ENCODE measurements at regions of chr11 and their contacts with region 1.

Region 1: GRCh38 chr11:129223701-129224149 is 31.6 kb upstream of the ARHGAP32 start:
- DNase-seq: peak; percentile 67
- H3K4me3 Mint-ChIP-seq: peak overlapping the region; percentile 48
- H3K27ac Mint-ChIP-seq: peak overlapping the region; percentile 57
- H3K4me1 Mint-ChIP-seq: peaks cover 22% of the 10 kb centered on the region
- H3K27me3 Mint-ChIP-seq: no peaks in the 10 kb centered on the region
- CTCF ChIP-seq: no peak

Region 2: DNA sequence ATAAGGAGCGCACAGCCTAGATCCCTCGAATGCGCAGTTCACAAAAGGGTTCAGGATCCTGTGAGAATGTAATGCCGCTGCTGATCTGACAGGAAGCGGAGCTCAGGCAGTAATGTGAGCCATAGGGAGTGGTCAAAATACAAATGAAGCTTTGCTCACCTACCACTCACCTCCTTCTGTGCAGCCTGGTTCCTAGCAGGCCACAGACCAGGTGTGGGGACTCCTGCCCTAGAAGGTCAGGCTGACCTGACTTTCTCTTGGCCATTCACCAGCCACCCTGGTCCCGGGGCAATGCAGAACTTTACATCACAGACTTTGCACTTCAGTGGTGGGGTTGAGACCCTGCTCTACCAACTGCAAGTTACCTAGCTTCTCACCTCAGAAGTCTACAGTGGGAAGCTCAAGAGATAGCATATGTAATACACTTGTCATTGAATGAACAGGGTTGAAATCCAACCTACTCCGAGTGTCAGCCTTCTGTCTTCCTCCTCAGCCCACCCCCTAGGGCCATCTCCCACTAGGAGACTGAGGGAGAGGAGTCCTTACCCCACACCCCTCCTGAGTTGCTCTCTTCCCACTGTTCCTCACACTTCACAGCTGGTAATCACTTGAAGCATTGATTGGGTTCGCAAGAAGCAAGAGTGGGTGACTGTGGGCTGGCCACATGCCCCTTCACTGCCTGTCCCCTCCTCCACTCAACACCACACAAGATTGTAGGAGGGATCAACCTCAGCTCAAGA is 354.7 kb before region 1 on chr11:
- CTCF ChIA-PET with region 1: no interaction called
- POLR2A ChIA-PET with region 1: no interaction called
- intact Hi-C with region 1: no loop called
- DNase-seq: no peak
- H3K4me3 Mint-ChIP-seq: no peak overlapping the region
- H3K27ac Mint-ChIP-seq: no peak overlapping the region
- H3K4me1 Mint-ChIP-seq: no peaks in the 10 kb centered on the region
- H3K27me3 Mint-ChIP-seq: peaks cover under 1% of the 10 kb centered on the region
- CTCF ChIP-seq: no peak

Region 3: GRCh38 chr11:129006161-129006560 is 217.6 kb before region 1 on chr11:
- CTCF ChIA-PET with region 1: no interaction called
- POLR2A ChIA-PET with region 1: no interaction called
- intact Hi-C with region 1: no loop called
- DNase-seq: no peak
- H3K4me3 Mint-ChIP-seq: no peak overlapping the region
- H3K27ac Mint-ChIP-seq: peak overlapping the region; percentile 70
- H3K4me1 Mint-ChIP-seq: no peaks in the 10 kb centered on the region
- H3K27me3 Mint-ChIP-seq: no peaks in the 10 kb centered on the region
- CTCF ChIP-seq: no peak

Region 4: DNA sequence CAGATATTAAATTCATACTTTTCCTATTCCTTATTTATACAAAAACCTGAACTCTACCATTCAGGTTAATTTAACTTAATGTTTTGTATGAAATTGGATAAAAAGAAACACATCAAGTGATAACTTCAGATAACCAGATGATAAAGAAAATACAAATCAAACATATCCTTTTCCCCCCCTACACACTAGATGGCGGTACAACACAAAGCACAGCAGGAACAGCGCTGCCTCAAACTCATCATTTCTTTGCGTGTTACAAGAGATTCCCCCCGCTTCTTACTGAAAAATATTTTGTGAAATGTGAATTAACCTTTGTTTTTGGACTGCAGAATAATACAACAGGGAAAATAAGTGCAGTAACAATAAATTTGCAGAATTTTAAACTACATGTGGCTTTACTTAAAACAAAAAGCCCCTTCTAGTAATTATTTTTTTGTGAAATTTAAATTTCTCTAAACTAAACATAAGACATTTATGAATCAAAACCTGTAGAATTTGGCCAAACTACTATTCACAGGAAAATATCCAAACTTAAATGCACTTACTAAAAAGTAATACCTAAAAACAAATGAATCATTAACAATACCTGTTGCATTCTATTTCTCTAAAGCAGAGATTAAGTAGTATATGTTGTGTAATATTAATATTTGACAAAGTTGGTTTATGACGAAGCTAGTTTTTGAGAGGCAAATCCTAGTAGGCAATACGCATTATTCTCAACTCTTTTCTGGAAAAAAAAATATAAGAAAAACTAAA is 106.0 kb before region 1 on chr11:
- CTCF ChIA-PET with region 1: interaction called, 8 read pairs
- POLR2A ChIA-PET with region 1: no interaction called
- intact Hi-C with region 1: loop called (anchors 5 kb)
- DNase-seq: peak; percentile 79
- H3K4me3 Mint-ChIP-seq: no peak overlapping the region
- H3K27ac Mint-ChIP-seq: no peak overlapping the region
- H3K4me1 Mint-ChIP-seq: peaks cover 33% of the 10 kb centered on the region
- H3K27me3 Mint-ChIP-seq: no peaks in the 10 kb centered on the region
- CTCF ChIP-seq: peak; percentile 84

Region 5: GRCh38 chr11:129143335-129143734 is 80.4 kb before region 1 on chr11:
- CTCF ChIA-PET with region 1: no interaction called
- POLR2A ChIA-PET with region 1: interaction called, 16 read pairs
- intact Hi-C with region 1: no loop called
- DNase-seq: peak; percentile 100
- H3K4me3 Mint-ChIP-seq: peak overlapping the region; percentile 70
- H3K27ac Mint-ChIP-seq: peak overlapping the region; percentile 94
- H3K4me1 Mint-ChIP-seq: peaks cover 32% of the 10 kb centered on the region
- H3K27me3 Mint-ChIP-seq: no peaks in the 10 kb centered on the region
- CTCF ChIP-seq: no peak

Region 6: DNA sequence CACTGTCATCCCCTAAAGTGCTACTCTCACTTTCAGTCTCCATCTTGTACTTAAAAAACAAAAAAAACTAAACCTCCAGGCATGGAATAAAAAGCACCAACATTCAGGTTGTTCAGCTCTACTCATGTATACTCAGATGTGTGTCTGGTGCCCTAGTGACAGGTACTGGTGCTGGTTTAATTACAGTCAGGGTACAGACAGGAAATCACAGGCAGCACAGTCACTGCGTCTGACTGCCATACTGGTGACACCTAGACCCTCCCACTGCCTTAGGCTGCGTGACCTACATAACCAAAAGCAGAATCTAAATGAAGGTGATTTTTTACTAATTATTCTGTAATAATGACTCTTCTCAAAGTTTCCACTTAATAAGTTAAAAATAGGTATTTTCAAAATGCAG is 31.6 kb before region 1 on chr11 and contains the start of gene ARHGAP32:
- CTCF ChIA-PET with region 1: no interaction called
- POLR2A ChIA-PET with region 1: interaction called, 40 read pairs
- intact Hi-C with region 1: no loop called
- DNase-seq: peak; percentile 51
- H3K4me3 Mint-ChIP-seq: no peak within 1 kb of the TSS
- H3K27ac Mint-ChIP-seq: no peak within 1 kb of the TSS
- H3K4me1 Mint-ChIP-seq: peaks cover 12% of the 10 kb centered on the region
- H3K27me3 Mint-ChIP-seq: no peaks in the 10 kb centered on the region
- CTCF ChIP-seq: no peak
- total RNA-seq, gene ARHGAP32: 62.6 and 71.3 TPM in 2 replicates

Region 7: GRCh38 chr11:129204150-129204838 is 19.4 kb before region 1 on chr11:
- CTCF ChIA-PET with region 1: no interaction called
- POLR2A ChIA-PET with region 1: interaction called, 11 read pairs
- intact Hi-C with region 1: no loop called
- DNase-seq: no peak
- H3K4me3 Mint-ChIP-seq: no peak overlapping the region
- H3K27ac Mint-ChIP-seq: no peak overlapping the region
- H3K4me1 Mint-ChIP-seq: peaks cover 12% of the 10 kb centered on the region
- H3K27me3 Mint-ChIP-seq: no peaks in the 10 kb centered on the region
- CTCF ChIP-seq: no peak

Region 8: DNA sequence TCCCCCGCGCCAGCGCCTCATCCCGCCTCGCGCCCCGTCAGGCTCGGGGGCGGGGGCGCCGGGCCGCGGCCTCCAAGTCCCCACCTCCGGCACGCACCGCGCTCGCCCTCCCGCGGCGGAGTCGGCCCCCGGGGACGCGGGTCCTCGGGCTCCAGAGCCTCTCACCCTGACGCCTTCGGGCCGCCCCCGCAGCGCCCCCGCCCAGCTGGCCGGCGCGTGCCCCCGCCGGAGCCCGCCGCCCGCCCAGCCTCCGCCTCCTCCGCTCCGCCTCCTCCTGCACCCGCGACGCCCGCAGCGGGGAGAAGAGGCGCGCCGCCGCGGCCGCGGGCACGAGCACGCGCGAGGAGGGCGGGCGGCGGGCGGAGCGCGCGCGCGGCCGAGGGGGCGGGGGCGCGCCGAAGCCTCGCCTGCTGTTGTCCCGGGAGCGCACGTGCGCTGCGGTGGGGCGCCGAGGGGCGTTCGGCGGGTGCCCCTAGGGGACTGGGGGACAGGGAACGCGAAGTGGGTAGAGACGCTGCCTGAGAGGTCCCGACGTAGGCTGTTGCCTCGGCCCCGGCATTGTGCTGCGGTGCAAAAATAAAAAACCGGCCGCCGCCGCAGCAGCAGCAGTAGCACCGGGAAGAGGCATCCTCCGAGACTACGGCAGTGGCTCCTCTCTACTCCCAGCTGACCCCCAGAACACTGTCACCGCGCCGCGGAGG is 55.8 kb after region 1 on chr11:
- CTCF ChIA-PET with region 1: no interaction called
- POLR2A ChIA-PET with region 1: interaction called, 6 read pairs
- intact Hi-C with region 1: loop called (anchors 5 kb)
- DNase-seq: peak; percentile 76
- H3K4me3 Mint-ChIP-seq: peak overlapping the region; percentile 80
- H3K27ac Mint-ChIP-seq: no peak overlapping the region
- H3K4me1 Mint-ChIP-seq: peaks cover 38% of the 10 kb centered on the region
- H3K27me3 Mint-ChIP-seq: no peaks in the 10 kb centered on the region
- CTCF ChIP-seq: peak; percentile 9

Measured in MCF 10A (cell line).